Right ventricle myocardium inferior (tissue), 1 donor: ENCODE measurements at regions of chr2 and their contacts with region 1.

Region 1: GRCh38 chr2:207529330-207530159 is at the start of gene CREB1:
- DNase-seq: peak; percentile 100
- ATAC-seq: peak; percentile 98
- total RNA-seq, gene CREB1: 57.0 TPM

Region 2: GRCh38 chr2:207481924-207482323 is 47.6 kb before region 1 on chr2:
- intact Hi-C with region 1: loop called (anchors 1 kb)
- DNase-seq: no peak
- ATAC-seq: peak; percentile 70

Region 3: DNA sequence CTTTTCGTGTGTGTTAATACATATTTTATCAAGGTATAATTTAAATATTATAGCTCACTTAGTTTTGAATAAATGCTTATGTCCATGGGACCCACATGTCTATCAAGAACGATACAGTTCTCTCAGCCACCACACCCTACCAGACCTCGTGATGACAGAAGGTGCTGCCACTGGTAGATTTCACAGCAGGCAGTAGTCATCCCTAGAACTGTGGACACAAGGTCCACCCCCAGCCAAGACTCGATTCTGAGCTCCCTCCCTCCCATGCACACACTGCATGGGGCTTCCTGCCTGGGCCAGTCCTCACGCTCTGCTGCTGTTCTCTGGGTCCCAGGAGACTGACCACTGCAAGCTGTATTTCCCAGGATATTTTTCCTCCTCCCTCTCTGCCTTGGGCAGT is 26.3 kb before region 1 on chr2:
- intact Hi-C with region 1: loop called (anchors 1 kb)
- DNase-seq: no peak
- ATAC-seq: peak; percentile 67

Region 4: GRCh38 chr2:207513551-207514257 is 15.8 kb before region 1 on chr2:
- intact Hi-C with region 1: loop called (anchors 2 kb)
- DNase-seq: no peak
- ATAC-seq: no peak

Region 5: DNA sequence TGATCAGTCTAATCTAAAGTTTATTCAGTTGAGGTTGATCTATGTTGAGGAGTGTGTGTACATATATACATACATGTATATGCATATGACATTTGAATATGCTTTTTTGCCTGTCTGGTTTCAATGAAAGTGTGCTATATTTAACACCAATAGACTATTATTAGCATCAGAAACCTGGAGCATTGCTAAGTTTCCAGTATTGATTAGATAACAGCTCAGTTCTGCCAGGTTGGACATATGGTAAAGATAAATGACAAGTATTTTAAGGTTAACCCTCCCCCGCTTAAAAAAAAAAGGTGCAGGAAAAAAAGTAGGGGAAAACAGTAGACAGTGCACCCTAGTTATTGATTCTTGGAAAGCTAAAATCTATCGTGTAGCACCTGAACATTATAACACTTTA is 19.6 kb after region 1 on chr2:
- intact Hi-C with region 1: loop called (anchors 2 kb)
- DNase-seq: no peak
- ATAC-seq: peak; percentile 39

Region 6: DNA sequence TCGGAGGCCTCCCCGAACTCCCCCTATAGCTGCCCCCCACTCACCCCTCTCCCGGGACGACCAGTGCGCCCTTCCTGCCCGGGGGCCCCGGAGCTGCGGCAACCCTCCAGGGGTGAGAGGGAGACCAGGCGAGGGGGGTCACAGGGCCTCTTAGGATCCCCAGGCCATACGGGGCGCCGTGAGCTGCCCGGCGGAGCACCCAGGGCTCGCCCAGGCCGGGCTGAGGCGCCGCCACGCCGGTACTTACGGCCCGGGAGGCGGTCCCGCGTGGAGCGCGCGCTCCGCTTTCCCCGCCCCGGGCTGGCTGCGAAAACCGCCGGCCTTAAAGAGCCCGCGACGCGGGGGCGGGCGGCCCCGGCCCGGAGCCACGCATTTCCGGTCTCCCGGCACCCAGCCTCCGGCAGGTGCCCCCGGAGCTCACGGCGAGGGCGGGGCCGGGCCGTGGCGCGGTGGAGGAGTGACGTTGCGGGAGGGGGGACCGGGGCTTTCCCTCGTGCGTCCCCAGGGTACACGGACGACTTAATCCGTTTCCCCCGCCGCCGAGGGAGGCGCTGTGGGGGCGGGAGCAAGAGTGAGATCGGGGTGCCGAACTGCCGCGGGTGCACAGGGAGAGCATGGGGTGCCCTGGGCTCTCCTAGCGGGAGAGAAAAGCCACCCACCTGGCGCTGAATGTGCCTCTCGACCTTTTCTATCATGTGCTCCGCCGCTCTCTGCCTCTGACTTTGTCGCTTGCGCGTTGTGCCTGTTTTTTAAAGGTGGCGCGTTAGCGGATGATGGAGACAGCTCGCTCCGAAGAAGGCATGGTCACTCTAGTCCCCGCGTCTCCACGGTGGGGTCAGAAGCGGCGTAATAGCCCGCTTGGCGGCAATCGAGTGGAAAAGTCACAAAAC is 95.7 kb after region 1 on chr2 and contains the start of gene METTL21A:
- intact Hi-C with region 1: loop called (anchors 2 kb)
- DNase-seq: peak; percentile 94
- ATAC-seq: peak; percentile 96
- total RNA-seq, gene METTL21A: 14.7 TPM

Region 7: DNA sequence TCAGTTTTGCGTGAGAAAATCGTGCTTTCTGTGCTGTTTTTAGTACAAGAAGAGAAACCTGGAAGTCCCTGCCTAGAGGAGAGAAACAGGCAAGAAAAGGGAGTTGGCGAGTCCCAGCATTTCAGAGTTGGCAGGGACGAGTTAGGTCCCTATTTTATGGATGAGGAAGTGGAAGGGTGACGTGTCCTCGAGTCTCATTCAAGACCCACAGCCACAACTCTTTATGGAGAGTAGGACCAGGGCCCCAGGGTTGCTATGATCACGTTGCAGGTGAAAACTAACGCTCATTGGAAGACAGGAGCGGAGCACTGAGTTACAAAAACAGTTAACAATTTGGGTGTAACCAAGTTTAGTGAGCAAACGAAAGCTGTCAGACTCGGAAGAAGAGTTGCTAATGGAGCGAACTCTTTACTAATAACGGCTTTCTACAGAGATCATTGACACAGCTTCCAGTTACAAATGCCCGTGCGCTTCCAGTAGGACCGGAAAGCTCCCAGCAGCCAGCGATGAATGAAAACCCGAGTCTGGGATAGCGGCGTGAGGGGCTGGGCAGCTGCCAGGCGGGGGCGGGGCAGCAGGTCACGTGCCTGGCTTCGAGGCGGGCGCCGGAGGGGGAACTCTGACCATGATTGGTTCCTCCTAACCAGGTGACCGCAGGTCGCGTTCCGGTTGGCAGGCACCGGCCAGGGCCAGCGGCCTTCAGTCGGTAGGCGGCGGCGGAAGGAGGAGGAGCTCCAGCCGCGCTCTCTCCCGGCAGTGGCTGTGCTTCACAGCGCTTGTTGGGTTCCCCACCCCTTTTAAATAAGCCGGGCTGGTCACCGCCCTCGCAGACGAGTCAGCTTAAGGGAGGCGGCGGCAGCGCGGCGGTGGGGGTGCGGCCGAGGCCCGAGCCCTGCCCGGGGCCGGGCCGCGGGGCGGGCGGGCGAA is 181.5 kb after region 1 on chr2 and contains the start of gene CCNYL1:
- intact Hi-C with region 1: loop called (anchors 5 kb)
- DNase-seq: peak; percentile 99
- ATAC-seq: peak; percentile 100
- total RNA-seq, gene CCNYL1: 10.2 TPM